ENCODE measurements at regions of chr7 and their contacts with region 1.

Region 1: DNA sequence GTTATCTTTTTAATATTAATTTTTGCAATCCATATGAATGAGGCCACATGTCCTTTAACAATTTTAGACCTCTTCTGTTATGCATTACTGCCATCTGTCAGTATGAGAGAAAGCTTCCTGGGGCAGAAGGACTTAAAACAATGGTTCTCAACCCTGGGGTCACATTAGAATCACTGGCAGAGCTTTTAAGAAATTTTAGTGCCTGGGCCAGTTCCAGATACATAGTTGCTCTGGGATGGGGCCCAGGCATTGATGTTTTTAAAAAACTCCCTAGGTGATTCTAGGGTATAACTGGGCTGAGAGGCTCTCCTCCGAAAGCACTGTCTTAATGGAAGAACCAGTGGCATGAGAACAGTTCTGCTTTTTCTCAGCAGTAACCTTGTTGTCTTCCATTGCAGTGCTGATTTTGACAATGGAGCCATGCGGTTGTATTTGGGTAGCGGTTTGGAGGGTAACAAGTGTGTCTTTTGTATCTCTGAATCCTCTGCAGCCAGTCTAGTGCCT is 226.9 kb downstream of the AUTS2 start:
- DNase-seq: no peak
- ATAC-seq: peak; percentile 56
- H3K4me3 ChIP-seq: peak overlapping the region; percentile 68; the same call in 1 of the 2 replicates
- H3K27ac ChIP-seq: peak overlapping the region; percentile 89
- H3K4me1 ChIP-seq: peaks cover 38% of the 10 kb centered on the region
- H3K27me3 ChIP-seq: no peaks in the 10 kb centered on the region
- CTCF ChIP-seq: peak in 1 of 3 experiments; percentile 56; a peak in 2 of 6 replicates
- EP300 ChIP-seq: no peak
- POLR2A ChIP-seq: no peak
- RAD21 ChIP-seq: peak; percentile 69

Region 2: DNA sequence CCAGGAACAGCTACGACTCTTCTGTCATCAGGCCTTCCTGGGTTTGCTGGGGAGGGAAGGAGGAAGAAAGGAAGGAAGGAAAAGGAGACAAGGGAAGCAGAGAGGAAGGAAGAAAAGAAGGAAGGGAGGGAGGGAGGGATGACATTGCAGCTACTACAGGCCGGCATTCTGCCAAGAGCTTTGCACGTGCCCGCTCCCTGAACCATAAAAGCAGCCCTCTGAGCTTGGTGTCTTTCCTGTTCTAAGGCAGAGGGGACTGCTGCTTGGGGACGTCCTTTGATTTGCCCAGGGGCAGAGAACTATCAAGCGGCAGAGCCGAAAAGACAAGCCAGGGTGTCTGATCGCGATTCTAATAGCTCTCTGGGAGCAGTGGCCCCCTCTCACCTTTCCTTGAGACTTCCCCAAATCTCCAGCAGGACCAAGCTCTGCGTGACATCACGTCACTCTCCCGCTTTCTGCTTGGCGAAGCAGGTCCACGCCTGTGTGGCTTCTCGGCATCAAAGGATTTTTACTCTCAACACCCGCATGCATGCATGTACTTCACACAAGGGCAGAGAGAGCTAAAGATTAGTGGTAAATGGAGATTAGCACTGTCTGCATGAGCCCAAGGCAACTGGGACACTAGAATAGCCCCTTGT is 394.7 kb before region 1 on chr7:
- CTCF ChIA-PET with region 1: no interaction called
- POLR2A ChIA-PET with region 1: no interaction called
- RAD21 ChIA-PET with region 1: interaction called, 3 read pairs
- SMC1A ChIA-PET with region 1: no interaction called
- in situ Hi-C with region 1: no loop called
- intact Hi-C with region 1: loop called (anchors 10 kb)
- DNase-seq: no peak
- ATAC-seq: peak; percentile 33
- H3K4me3 ChIP-seq: no peak overlapping the region
- H3K27ac ChIP-seq: no peak overlapping the region
- H3K4me1 ChIP-seq: peaks cover 2% of the 10 kb centered on the region; the same call in 1 of the 2 replicates
- H3K27me3 ChIP-seq: no peaks in the 10 kb centered on the region
- CTCF ChIP-seq: no peak
- EP300 ChIP-seq: no peak
- POLR2A ChIP-seq: no peak
- RAD21 ChIP-seq: no peak

Region 3: GRCh38 chr7:69696054-69696591 is 129.0 kb before region 1 on chr7:
- CTCF ChIA-PET with region 1: interaction called, 4 read pairs
- POLR2A ChIA-PET with region 1: no interaction called
- RAD21 ChIA-PET with region 1: interaction called, 22 read pairs
- SMC1A ChIA-PET with region 1: interaction called, 14 read pairs
- in situ Hi-C with region 1: no loop called
- intact Hi-C with region 1: loop called (anchors 5 kb)
- DNase-seq: peak; percentile 88
- ATAC-seq: peak; percentile 82
- H3K4me3 ChIP-seq: no peak overlapping the region; the same call in 1 of the 2 replicates
- H3K27ac ChIP-seq: peak overlapping the region; percentile 41
- H3K4me1 ChIP-seq: peaks cover 59% of the 10 kb centered on the region
- H3K27me3 ChIP-seq: no peaks in the 10 kb centered on the region
- CTCF ChIP-seq: no peak
- EP300 ChIP-seq: peak; percentile 91 to 97
- POLR2A ChIP-seq: no peak
- RAD21 ChIP-seq: peak; percentile 7; the same call in 1 of the 2 replicates

Region 4: GRCh38 chr7:69843653-69844052 is 18.5 kb after region 1 on chr7:
- CTCF ChIA-PET with region 1: interaction called, 16 read pairs
- POLR2A ChIA-PET with region 1: interaction called, 5 read pairs
- RAD21 ChIA-PET with region 1: interaction called, 40 read pairs
- SMC1A ChIA-PET with region 1: interaction called, 145 read pairs
- in situ Hi-C with region 1: no loop called
- intact Hi-C with region 1: loop called (anchors 2 kb)
- DNase-seq: peak; percentile 74
- ATAC-seq: peak; percentile 71
- H3K4me3 ChIP-seq: peak overlapping the region; percentile 25; the same call in 1 of the 2 replicates
- H3K27ac ChIP-seq: peak overlapping the region; percentile 71
- H3K4me1 ChIP-seq: peaks cover 67% of the 10 kb centered on the region
- H3K27me3 ChIP-seq: no peaks in the 10 kb centered on the region
- CTCF ChIP-seq: no peak
- EP300 ChIP-seq: no peak; a peak in 1 of 4 replicates
- POLR2A ChIP-seq: no peak
- RAD21 ChIP-seq: no peak

Region 5: DNA sequence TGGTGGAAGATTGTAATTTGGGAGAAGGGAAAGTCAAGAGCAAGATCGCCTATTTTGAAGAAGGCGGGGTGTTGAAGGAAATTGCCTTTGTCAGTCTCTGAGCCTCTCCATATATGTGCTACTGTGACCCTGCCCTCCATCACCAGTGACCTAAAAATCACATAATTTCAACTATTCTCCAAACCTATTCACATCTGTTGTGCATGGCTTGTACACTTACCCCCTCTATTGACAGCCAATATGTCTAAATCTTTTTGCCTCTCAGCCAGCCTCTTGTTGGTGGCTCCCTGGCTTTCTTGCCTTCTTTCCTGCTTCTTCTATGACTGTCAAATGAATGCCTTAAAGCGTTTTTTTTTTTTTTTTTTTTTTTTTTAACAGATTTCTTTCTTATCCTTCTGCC is 68.7 kb after region 1 on chr7:
- CTCF ChIA-PET with region 1: interaction called, 7 read pairs
- POLR2A ChIA-PET with region 1: interaction called, 3 read pairs
- RAD21 ChIA-PET with region 1: interaction called, 16 read pairs
- SMC1A ChIA-PET with region 1: interaction called, 13 read pairs
- in situ Hi-C with region 1: no loop called
- intact Hi-C with region 1: loop called (anchors 2 kb)
- DNase-seq: no peak
- ATAC-seq: peak; percentile 46
- H3K4me3 ChIP-seq: no peak overlapping the region
- H3K27ac ChIP-seq: no peak overlapping the region
- H3K4me1 ChIP-seq: peaks cover 34% of the 10 kb centered on the region
- H3K27me3 ChIP-seq: no peaks in the 10 kb centered on the region
- CTCF ChIP-seq: peak; percentile 53 to 74 (median 57); a peak in 5 of 6 replicates
- EP300 ChIP-seq: no peak
- POLR2A ChIP-seq: no peak
- RAD21 ChIP-seq: peak; percentile 88